BJ (cell line): ENCODE measurements at regions of chr5 and their contacts with region 1.

Region 1: GRCh38 chr5:99060306-99061261 is 131.8 kb upstream of the CHD1 start:
- DNase-seq: no peak
- H3K4me3 ChIP-seq: no peak overlapping the region
- H3K27me3 ChIP-seq: no peaks in the 10 kb centered on the region
- CTCF ChIP-seq: peak; percentile 92

Region 2: DNA sequence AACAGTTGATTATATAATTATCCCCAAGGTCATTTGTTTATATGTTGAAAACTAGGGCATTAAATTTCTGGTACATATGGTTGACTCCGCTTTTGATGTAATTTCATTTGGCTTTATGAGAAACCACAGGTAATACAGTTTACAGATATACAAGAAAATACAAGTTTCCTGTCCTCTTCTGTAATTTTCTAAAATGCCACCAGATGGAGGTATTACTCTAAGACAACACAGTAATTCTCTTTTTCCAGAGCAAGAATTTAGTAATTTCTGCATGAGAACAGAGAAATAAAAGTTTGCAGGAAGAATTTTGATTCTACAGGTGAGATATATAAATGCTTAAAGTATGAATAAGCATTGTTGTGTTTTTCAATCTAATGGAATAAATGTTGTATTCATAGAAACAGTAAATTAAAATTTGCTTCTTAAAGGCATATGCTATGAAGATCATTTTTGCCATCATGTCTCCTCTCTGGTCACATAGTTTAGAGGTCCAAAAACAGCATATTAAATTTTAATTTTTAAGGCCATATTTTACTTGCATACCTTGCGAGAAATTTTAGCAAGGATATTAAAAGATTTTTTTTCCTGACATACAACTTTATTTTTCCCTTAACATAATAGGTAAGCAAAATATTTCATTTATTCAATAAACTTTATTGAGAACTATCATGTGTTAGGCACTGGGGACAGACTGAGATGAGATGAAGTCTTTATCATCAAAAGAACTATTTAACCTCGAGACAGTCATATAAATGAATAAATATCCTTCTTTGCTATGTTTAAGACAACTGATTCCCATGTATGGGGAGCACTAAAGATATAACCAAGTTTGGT is 154.5 kb before region 1 on chr5:
- CTCF ChIA-PET with region 1: interaction called, 17 read pairs
- POLR2A ChIA-PET with region 1: no interaction called
- DNase-seq: no peak
- H3K4me3 ChIP-seq: no peak overlapping the region
- H3K27me3 ChIP-seq: no peaks in the 10 kb centered on the region
- CTCF ChIP-seq: peak; percentile 55

Region 3: GRCh38 chr5:99032234-99033013 is 28.2 kb before region 1 on chr5:
- CTCF ChIA-PET with region 1: interaction called, 13 read pairs
- POLR2A ChIA-PET with region 1: no interaction called
- DNase-seq: peak; percentile 36
- H3K4me3 ChIP-seq: no peak overlapping the region
- H3K27me3 ChIP-seq: no peaks in the 10 kb centered on the region
- CTCF ChIP-seq: peak; percentile 83

Region 4: DNA sequence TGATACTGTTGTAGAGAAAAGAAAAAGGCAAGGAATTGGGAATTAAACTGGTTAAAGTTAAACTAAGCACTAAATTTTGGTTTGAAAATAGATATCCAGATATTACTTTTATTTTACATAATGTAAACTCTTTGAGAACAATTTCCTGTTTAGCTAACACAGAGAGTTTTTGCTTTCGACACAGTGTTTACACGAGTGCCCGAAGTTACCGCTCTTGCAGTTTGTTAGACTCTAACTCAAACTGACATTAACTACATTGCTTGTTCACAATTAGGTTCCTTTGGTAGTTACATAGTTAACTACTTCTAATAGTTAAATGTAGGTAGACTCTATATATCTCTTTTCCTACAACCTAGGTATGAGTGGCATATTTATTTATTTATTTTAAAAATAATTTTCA is 14.7 kb before region 1 on chr5:
- CTCF ChIA-PET with region 1: interaction called, 25 read pairs
- POLR2A ChIA-PET with region 1: no interaction called
- DNase-seq: no peak
- H3K4me3 ChIP-seq: no peak overlapping the region
- H3K27me3 ChIP-seq: no peaks in the 10 kb centered on the region
- CTCF ChIP-seq: no peak